ENCODE measurements at regions of chr4 and their contacts with region 1.

Region 1: GRCh38 chr4:7802093-7802726 is 137.5 kb downstream of the AFAP1 start:
- DNase-seq: peak; percentile 60
- H3K4me3 ChIP-seq: no peak overlapping the region
- H3K27ac ChIP-seq: no peak overlapping the region
- H3K4me1 ChIP-seq: peaks cover 22% of the 10 kb centered on the region
- H3K27me3 ChIP-seq: no peaks in the 10 kb centered on the region
- CTCF ChIP-seq: peak; percentile 87

Region 2: DNA sequence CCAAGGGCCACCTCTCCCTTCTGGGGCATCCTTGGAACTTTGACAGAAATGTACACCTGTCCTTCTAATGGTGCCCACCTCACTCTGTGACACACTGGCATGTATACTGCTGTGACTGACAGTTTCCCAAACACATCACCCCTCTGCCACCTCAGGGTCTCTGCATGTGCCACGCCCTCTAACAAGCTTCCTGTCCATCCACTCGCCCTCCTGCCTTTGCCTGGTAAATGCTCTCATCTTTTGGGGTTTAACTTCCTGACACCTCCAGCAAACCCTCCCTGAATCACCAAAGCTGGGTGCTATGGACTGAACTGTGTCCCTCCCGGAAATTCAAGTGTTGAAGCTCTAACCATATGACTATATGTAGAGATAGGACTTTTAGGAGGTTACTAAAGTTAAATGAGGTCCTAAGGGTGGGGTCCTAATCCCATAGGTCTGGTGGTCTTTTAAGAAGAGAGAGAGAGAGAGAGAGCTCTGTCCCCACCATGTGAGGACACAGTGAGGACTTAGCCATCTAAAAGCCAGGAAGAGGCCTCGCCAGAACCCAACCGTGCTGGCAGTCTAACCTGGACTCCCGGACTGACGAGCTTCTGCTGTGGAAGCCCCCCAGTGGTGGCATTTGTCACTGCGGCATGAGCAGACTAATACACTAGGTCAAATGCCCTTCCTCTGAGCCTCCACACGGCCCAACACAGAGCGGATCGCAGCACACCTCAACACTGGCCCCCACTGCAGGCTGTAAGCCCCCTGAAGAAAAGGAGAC is 41.8 kb after region 1 on chr4:
- CTCF ChIA-PET with region 1: interaction called, 17 read pairs
- dilution Hi-C with region 1: no loop called
- in situ Hi-C with region 1: no loop called
- intact Hi-C with region 1: loop called (anchors 1 kb)
- DNase-seq: no peak
- H3K4me3 ChIP-seq: no peak overlapping the region
- H3K27ac ChIP-seq: peak overlapping the region; percentile 98
- H3K4me1 ChIP-seq: peaks cover 46% of the 10 kb centered on the region
- H3K27me3 ChIP-seq: no peaks in the 10 kb centered on the region
- CTCF ChIP-seq: peak; percentile 53 to 55

Region 3: GRCh38 chr4:7876201-7876875 is 74.1 kb after region 1 on chr4:
- CTCF ChIA-PET with region 1: interaction called, 3 read pairs
- dilution Hi-C with region 1: no loop called
- in situ Hi-C with region 1: no loop called
- intact Hi-C with region 1: loop called (anchors 1 kb)
- DNase-seq: peak; percentile 66
- H3K4me3 ChIP-seq: no peak overlapping the region
- H3K27ac ChIP-seq: no peak overlapping the region
- H3K4me1 ChIP-seq: peaks cover 22% of the 10 kb centered on the region
- H3K27me3 ChIP-seq: no peaks in the 10 kb centered on the region
- CTCF ChIP-seq: peak; percentile 34 to 49

Region 4: DNA sequence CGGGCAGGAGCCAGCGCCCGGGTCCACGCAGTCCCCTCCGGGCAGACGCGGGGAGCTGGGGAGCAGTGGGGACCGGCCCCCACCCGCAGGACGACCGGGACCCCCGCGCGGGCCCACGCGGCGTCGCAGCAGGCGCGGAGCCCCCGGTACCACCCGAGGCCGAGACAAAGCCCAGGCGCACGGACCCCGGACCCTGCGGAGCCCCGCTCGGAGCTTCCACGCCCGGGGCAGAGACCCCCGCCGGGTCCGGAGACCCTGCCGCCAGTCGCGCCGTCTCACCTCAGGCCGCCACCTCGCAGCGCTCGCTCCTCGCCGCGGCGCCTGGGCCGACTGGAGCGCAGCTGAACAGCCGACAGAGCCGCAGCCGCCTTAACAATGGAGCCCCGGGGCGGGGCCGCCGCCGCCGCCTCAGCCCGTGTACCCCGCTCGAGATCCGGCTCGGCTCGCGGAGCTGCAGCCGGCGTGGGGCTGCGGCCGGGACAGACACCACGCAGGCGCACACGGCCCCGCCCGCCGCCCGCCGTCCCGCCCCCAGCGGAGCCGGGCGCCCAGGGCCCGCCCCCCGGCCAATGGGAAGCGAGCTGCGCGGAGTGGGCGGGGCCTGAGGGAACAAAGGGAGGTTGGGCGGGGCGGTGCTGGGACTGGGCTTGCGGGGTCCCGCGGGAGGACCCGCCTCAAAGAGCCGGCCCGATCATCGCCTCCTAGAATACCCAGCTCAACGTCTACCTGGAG is 137.3 kb after region 1 on chr4 and contains the start of gene AFAP1:
- CTCF ChIA-PET with region 1: interaction called, 34 read pairs
- dilution Hi-C with region 1: no loop called
- in situ Hi-C with region 1: no loop called
- intact Hi-C with region 1: loop called (anchors 2 kb)
- DNase-seq: peak; percentile 83
- H3K4me3 ChIP-seq: peak within 1 kb of the TSS; percentile 90 to 98 (median 93)
- H3K27ac ChIP-seq: peak within 1 kb of the TSS; percentile 72
- H3K4me1 ChIP-seq: peaks cover 11% of the 10 kb centered on the region
- H3K27me3 ChIP-seq: no peaks in the 10 kb centered on the region
- CTCF ChIP-seq: no peak
- total RNA-seq, gene AFAP1: 22.9 to 36.0 TPM

Region 5: DNA sequence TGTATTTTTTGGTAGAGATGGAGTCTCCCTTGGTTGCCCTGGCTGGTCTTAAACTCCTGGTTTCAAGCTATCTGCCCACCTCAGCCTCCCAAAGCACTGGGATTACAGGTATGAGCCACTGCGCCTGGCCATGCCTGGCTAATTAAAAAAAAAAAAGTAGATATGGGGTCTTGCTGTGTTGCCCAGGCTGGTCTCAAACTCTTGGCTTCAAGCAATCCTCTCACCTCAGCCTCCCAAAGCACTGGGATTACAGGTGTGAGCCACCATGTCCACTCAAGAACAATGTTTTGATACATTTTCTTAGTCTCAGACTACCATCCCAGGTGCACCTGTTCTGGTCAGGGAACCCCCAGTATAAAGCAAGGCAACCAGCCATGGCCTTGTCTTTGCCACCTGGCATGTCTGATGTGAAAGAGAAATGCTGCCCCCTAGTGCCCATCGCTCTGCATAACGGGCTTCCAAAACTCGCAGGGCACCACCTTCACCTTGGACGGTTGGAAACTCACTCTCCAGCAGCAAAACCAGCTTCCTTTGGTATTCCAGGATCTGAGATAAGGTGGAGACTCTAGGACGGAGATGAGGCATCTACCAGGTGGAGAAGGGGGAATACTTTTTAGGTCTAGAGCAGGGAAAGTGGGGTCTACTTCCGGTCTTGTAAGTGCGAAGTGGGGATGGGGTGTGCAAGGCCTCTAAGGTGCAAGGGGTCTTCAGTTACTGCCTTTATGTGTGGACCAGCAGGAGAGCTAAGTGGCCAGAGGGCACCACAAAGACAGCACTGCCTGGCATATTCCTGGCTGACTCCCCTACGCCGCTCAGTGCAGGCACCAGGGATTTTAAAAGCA is 185.2 kb after region 1 on chr4:
- CTCF ChIA-PET with region 1: interaction called, 4 read pairs
- dilution Hi-C with region 1: no loop called
- in situ Hi-C with region 1: loop called (anchors 5 to 10 kb)
- intact Hi-C with region 1: loop called (anchors 1 kb)
- DNase-seq: peak; percentile 59
- H3K4me3 ChIP-seq: no peak overlapping the region
- H3K27ac ChIP-seq: no peak overlapping the region
- H3K4me1 ChIP-seq: peaks cover 12% of the 10 kb centered on the region
- H3K27me3 ChIP-seq: no peaks in the 10 kb centered on the region
- CTCF ChIP-seq: peak; percentile 85 to 95

Measured in mammary epithelial cell (primary cell).